ENCODE measurements at regions of chr5 and their contacts with region 1.

Region 1: DNA sequence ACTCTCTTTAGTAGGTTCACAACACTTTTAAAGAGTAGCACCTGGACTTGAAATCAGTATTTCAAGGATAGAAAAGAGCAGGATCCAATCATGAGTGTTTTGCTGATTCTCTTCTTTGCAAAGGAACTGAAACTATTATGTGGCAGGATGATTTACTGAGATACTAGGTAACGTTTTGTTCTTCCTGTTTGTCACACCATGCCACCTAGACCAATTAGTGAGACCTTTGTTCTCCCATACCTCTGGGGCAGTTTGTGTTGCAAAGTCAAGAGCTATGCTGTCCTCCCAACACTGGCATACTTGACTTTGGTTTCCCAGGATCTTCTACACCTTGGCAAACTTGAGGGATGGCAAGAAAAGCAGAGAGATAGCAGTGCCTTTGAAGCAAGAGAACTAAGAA is 43.4 kb downstream of the PPP1R2B start:
- DNase-seq: peak; percentile 86
- H3K4me3 ChIP-seq: peak overlapping the region; percentile 19
- H3K27ac ChIP-seq: peak overlapping the region; percentile 92
- H3K4me1 ChIP-seq: peaks cover 76% of the 10 kb centered on the region
- CTCF ChIP-seq: no peak

Region 2: GRCh38 chr5:156850206-156850751 is 43.2 kb before region 1 on chr5 and contains the start of gene PPP1R2B:
- CTCF ChIA-PET with region 1: no interaction called
- POLR2A ChIA-PET with region 1: interaction called, 10 read pairs
- intact Hi-C with region 1: no loop called
- DNase-seq: no peak
- H3K4me3 ChIP-seq: no peak within 1 kb of the TSS
- H3K27ac ChIP-seq: no peak within 1 kb of the TSS
- H3K4me1 ChIP-seq: peaks cover 6% of the 10 kb centered on the region
- CTCF ChIP-seq: no peak
- total RNA-seq, gene PPP1R2B: 0.15 TPM in 1 of 2 replicates, not detected in the other

Region 3: DNA sequence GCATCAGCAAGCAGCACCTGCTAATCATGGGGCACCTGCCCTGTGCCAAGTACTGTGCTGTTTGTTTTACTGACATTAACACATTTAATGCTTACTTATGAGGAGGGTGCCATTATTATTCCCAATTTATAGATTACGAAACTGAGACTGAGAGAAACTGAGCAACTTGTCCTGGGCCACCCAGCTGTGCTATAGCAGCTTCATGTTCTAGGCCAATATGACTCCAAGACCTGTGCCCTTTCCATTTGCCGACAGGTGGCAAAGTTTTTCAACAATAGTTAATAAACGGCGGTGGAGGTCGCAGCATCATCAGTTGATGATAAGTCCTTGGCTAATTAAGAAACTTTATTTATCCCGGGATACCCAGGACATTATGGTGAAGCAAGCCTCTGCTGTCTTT is 14.2 kb after region 1 on chr5:
- CTCF ChIA-PET with region 1: interaction called, 3 read pairs
- POLR2A ChIA-PET with region 1: interaction called, 38 read pairs
- intact Hi-C with region 1: no loop called
- DNase-seq: no peak
- H3K4me3 ChIP-seq: no peak overlapping the region
- H3K27ac ChIP-seq: no peak overlapping the region
- H3K4me1 ChIP-seq: peaks cover 50% of the 10 kb centered on the region
- CTCF ChIP-seq: no peak

Region 4: GRCh38 chr5:156920042-156920860 is 26.7 kb after region 1 on chr5:
- CTCF ChIA-PET with region 1: interaction called, 4 read pairs
- POLR2A ChIA-PET with region 1: interaction called, 81 read pairs
- intact Hi-C with region 1: no loop called
- DNase-seq: no peak
- H3K4me3 ChIP-seq: peak overlapping the region; percentile 7
- H3K27ac ChIP-seq: peak overlapping the region; percentile 83
- H3K4me1 ChIP-seq: peaks cover 96% of the 10 kb centered on the region
- CTCF ChIP-seq: no peak

Region 5: GRCh38 chr5:156981481-156981880 is 88.0 kb after region 1 on chr5:
- CTCF ChIA-PET with region 1: no interaction called
- POLR2A ChIA-PET with region 1: interaction called, 22 read pairs
- intact Hi-C with region 1: no loop called
- DNase-seq: peak; percentile 61
- H3K4me3 ChIP-seq: peak overlapping the region; percentile 49
- H3K27ac ChIP-seq: peak overlapping the region; percentile 95
- H3K4me1 ChIP-seq: peaks cover 69% of the 10 kb centered on the region
- CTCF ChIP-seq: no peak

Region 6: DNA sequence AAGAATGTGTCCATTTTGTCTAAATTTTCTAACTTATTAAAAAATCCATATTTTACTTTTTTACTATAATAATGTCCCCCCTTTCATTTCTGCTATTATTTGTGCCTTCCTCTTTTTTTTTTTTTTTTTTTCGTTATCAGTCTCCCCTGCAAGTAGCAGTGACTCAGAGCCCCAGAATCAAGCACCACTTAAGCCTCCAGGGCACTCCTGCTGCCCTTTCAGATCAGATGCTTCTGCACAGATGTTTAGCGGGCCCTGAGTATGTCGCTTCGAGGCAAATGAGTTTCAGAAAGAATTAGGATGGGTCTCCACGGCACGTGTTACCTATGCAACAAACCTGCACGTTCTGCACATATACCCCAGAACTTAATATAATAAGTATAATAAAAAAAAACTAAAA is 237.4 kb after region 1 on chr5:
- CTCF ChIA-PET with region 1: no interaction called
- POLR2A ChIA-PET with region 1: no interaction called
- intact Hi-C with region 1: loop called (anchors 1 kb)
- DNase-seq: peak; percentile 66
- H3K4me3 ChIP-seq: no peak overlapping the region
- H3K27ac ChIP-seq: peak overlapping the region; percentile 40
- H3K4me1 ChIP-seq: peaks cover 50% of the 10 kb centered on the region
- CTCF ChIP-seq: no peak

Region 7: GRCh38 chr5:157540707-157541446 is 647.4 kb after region 1 on chr5:
- CTCF ChIA-PET with region 1: no interaction called
- POLR2A ChIA-PET with region 1: no interaction called
- intact Hi-C with region 1: no loop called
- DNase-seq: peak; percentile 39
- H3K4me3 ChIP-seq: peak overlapping the region; percentile 38
- H3K27ac ChIP-seq: no peak overlapping the region
- H3K4me1 ChIP-seq: peaks cover 37% of the 10 kb centered on the region
- CTCF ChIP-seq: no peak

Measured in OCI-LY7 (cell line).